ENCODE measurements at regions of chr1 and their contacts with region 1.

Region 1: GRCh38 chr1:202750758-202751157 is 40.5 kb upstream of the SYT2 start:
- DNase-seq: peak in 2 of 5 donors; percentile 1 to 7
- H3K4me3 ChIP-seq: no peak overlapping the region
- H3K4me3 Mint-ChIP-seq: no peak overlapping the region
- H3K27ac ChIP-seq: no peak overlapping the region
- H3K27ac Mint-ChIP-seq: peak overlapping the region in 1 of 7 donors; percentile 32
- H3K4me1 ChIP-seq: no peaks in the 10 kb centered on the region
- H3K4me1 Mint-ChIP-seq: no peaks in the 10 kb centered on the region
- H3K27me3 ChIP-seq: no peaks in the 10 kb centered on the region
- H3K27me3 Mint-ChIP-seq: no peaks in the 10 kb centered on the region

Region 2: GRCh38 chr1:202852163-202852904 is 101.6 kb after region 1 on chr1:
- CTCF ChIA-PET with region 1: interaction called, 23 read pairs
- POLR2A ChIA-PET with region 1: no interaction called
- intact Hi-C with region 1: no loop called
- DNase-seq: peak in 3 of 5 donors; percentile 24 to 30 (median 27)
- H3K4me3 ChIP-seq: no peak overlapping the region
- H3K4me3 Mint-ChIP-seq: no peak overlapping the region
- H3K27ac ChIP-seq: no peak overlapping the region
- H3K27ac Mint-ChIP-seq: no peak overlapping the region
- H3K4me1 ChIP-seq: no peaks in the 10 kb centered on the region
- H3K4me1 Mint-ChIP-seq: no peaks in the 10 kb centered on the region
- H3K27me3 ChIP-seq: no peaks in the 10 kb centered on the region
- H3K27me3 Mint-ChIP-seq: no peaks in the 10 kb centered on the region

Region 3: GRCh38 chr1:202998836-202999750 is 248.3 kb after region 1 on chr1:
- CTCF ChIA-PET with region 1: interaction called, 10 read pairs
- POLR2A ChIA-PET with region 1: no interaction called
- intact Hi-C with region 1: loop called (anchors 1 kb)
- DNase-seq: peak; percentile 57 to 69 (median 64)
- H3K4me3 ChIP-seq: no peak overlapping the region
- H3K4me3 Mint-ChIP-seq: peak overlapping the region in 5 of 8 donors; percentile 1 to 52 (median 11)
- H3K27ac ChIP-seq: no peak overlapping the region
- H3K27ac Mint-ChIP-seq: peak overlapping the region in 1 of 7 donors; percentile 10
- H3K4me1 ChIP-seq: peaks cover 4% of the 10 kb centered on the region
- H3K4me1 Mint-ChIP-seq: peaks cover 5 to 12% (median 6%) of the 10 kb centered on the region in 4 donors
- H3K27me3 ChIP-seq: peaks cover 7% of the 10 kb centered on the region
- H3K27me3 Mint-ChIP-seq: peaks cover 15 to 16% of the 10 kb centered on the region in 2 donors

Region 4: GRCh38 chr1:203038891-203039608 is 288.3 kb after region 1 on chr1:
- CTCF ChIA-PET with region 1: no interaction called
- POLR2A ChIA-PET with region 1: no interaction called
- intact Hi-C with region 1: no loop called
- DNase-seq: peak; percentile 50 to 55 (median 54)
- H3K4me3 ChIP-seq: no peak overlapping the region
- H3K4me3 Mint-ChIP-seq: no peak overlapping the region
- H3K27ac ChIP-seq: no peak overlapping the region
- H3K27ac Mint-ChIP-seq: no peak overlapping the region
- H3K4me1 ChIP-seq: no peaks in the 10 kb centered on the region
- H3K4me1 Mint-ChIP-seq: peaks cover 2 to 6% (median 4%) of the 10 kb centered on the region in 4 donors
- H3K27me3 ChIP-seq: no peaks in the 10 kb centered on the region
- H3K27me3 Mint-ChIP-seq: peaks cover 3 to 8% of the 10 kb centered on the region in 2 donors

Measured in CD4-positive, alpha-beta memory T cell (primary cell).